CD4-positive, alpha-beta memory T cell (primary cell): ENCODE measurements at regions of chr7 and their contacts with region 1.

Region 1: GRCh38 chr7:1473864-1474512 is 14.7 kb upstream of the MICALL2 start:
- DNase-seq: peak; percentile 85 to 88 (median 87)
- H3K4me3 ChIP-seq: no peak overlapping the region
- H3K4me3 Mint-ChIP-seq: no peak overlapping the region
- H3K27ac ChIP-seq: no peak overlapping the region
- H3K27ac Mint-ChIP-seq: peak overlapping the region in 2 of 7 donors; percentile 4 to 47
- H3K4me1 ChIP-seq: peaks cover 14% of the 10 kb centered on the region
- H3K4me1 Mint-ChIP-seq: peaks cover 3 to 14% (median 10%) of the 10 kb centered on the region in 4 donors
- H3K27me3 ChIP-seq: no peaks in the 10 kb centered on the region
- H3K27me3 Mint-ChIP-seq: no peaks in the 10 kb centered on the region

Region 2: DNA sequence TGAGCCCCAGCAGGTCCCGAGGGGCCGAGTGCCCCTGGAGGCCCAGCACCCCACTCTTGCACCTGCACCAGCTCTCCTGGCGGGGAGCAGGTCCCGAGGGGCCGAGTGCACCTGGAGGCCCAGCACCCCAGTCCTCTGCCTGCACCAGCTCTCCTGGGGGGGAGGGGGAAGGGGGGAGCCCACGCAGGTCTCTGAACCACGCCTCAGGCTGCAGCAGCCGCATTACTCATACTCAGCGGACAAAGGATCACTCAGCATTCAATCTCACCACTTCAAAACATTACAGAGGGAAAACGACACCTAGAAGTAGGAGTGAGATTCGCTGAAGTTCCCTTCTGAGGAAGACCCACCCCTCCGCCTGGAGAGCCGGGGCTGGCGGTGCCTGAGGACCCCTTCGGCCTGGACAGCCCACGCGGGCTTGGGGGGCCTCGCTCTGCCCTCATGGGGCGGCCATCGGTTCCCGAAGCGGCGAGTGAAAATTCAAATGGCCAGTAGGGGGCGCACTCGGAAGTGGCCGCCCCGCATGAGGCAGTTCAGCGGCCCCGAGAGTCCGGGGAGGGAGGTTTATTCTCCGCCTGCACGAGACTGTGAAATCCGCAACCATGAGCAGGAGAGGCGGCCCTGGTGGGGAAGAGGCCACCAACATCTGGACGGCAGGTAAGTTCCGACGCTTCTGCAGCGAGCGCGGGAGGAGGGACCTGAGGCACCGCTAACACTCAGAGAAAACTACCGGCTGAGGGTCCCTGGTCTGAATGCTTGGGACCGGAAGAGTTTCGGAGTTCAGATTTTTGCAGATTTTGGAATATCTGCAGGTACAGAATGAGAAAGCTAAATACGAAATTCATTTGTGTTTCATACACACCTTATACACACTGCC is 387.2 kb before region 1 on chr7:
- CTCF ChIA-PET with region 1: no interaction called
- POLR2A ChIA-PET with region 1: no interaction called
- intact Hi-C with region 1: loop called (anchors 2 kb)
- DNase-seq: peak; percentile 56 to 67 (median 59)
- H3K4me3 ChIP-seq: peak overlapping the region in 1 of 2 donors; percentile 21
- H3K4me3 Mint-ChIP-seq: peak overlapping the region; percentile 65 to 79 (median 70)
- H3K27ac ChIP-seq: no peak overlapping the region
- H3K27ac Mint-ChIP-seq: peak overlapping the region in 2 of 7 donors; percentile 36 to 47
- H3K4me1 ChIP-seq: peaks cover 10% of the 10 kb centered on the region
- H3K4me1 Mint-ChIP-seq: peaks cover 8 to 14% (median 9%) of the 10 kb centered on the region in 4 donors
- H3K27me3 ChIP-seq: no peaks in the 10 kb centered on the region
- H3K27me3 Mint-ChIP-seq: no peaks in the 10 kb centered on the region

Region 3: GRCh38 chr7:1156782-1157535 is 317.0 kb before region 1 on chr7:
- CTCF ChIA-PET with region 1: no interaction called
- POLR2A ChIA-PET with region 1: no interaction called
- intact Hi-C with region 1: no loop called
- DNase-seq: no peak
- H3K4me3 ChIP-seq: no peak overlapping the region
- H3K4me3 Mint-ChIP-seq: peak overlapping the region in 5 of 8 donors; percentile 15 to 88 (median 35)
- H3K27ac ChIP-seq: no peak overlapping the region
- H3K27ac Mint-ChIP-seq: peak overlapping the region in 1 of 7 donors; percentile 79
- H3K4me1 ChIP-seq: peaks cover 29% of the 10 kb centered on the region
- H3K4me1 Mint-ChIP-seq: peaks cover 15 to 30% (median 23%) of the 10 kb centered on the region in 4 donors
- H3K27me3 ChIP-seq: no peaks in the 10 kb centered on the region
- H3K27me3 Mint-ChIP-seq: no peaks in the 10 kb centered on the region

Region 4: GRCh38 chr7:1412322-1413261 is 61.4 kb before region 1 on chr7:
- CTCF ChIA-PET with region 1: interaction called, 4 read pairs
- POLR2A ChIA-PET with region 1: no interaction called
- intact Hi-C with region 1: loop called (anchors 2 kb)
- DNase-seq: peak; percentile 86 to 89 (median 87)
- H3K4me3 ChIP-seq: peak overlapping the region in 1 of 2 donors; percentile 38
- H3K4me3 Mint-ChIP-seq: peak overlapping the region; percentile 49 to 80 (median 68)
- H3K27ac ChIP-seq: no peak overlapping the region
- H3K27ac Mint-ChIP-seq: peak overlapping the region in 5 of 7 donors; percentile 15 to 89 (median 42)
- H3K4me1 ChIP-seq: peaks cover 20% of the 10 kb centered on the region
- H3K4me1 Mint-ChIP-seq: peaks cover 10 to 15% (median 14%) of the 10 kb centered on the region in 4 donors
- H3K27me3 ChIP-seq: no peaks in the 10 kb centered on the region
- H3K27me3 Mint-ChIP-seq: peaks cover 5 to 6% of the 10 kb centered on the region in 2 donors

Region 5: DNA sequence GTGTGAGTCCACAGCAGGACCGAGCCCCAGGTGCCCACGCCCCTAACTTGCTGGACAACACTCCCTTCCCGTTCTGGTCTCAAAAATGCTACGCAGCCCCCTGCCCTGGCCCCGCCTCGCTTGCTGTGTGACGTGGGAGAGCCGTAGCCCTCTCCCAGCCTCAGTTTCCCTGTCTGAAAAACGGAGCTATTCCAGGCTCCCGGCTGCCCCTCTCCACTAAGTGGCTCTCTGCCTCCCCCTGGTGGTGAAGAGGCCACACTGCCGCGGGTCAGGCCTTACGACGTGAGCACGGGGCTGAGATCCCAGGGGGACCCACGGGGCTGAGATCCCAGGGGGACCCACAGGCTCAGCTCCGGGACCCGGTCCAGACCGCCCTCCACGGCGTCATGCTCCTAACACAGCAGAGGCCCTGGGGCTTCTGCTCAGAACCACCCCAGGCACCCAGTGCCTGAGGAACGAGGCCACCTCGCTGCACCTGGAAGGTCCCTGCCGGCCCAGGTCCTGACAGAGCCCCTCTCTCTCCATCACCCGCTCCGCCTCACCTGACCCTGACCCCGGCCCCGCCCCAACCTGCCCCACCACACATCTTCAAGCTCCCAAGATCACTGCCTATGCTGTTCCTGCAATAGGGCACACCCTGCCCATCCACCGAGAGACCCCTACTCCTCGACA is 41.4 kb before region 1 on chr7:
- CTCF ChIA-PET with region 1: interaction called, 17 read pairs
- POLR2A ChIA-PET with region 1: interaction called, 3 read pairs
- intact Hi-C with region 1: loop called (anchors 1 kb)
- DNase-seq: peak; percentile 61 to 75 (median 69)
- H3K4me3 ChIP-seq: no peak overlapping the region
- H3K4me3 Mint-ChIP-seq: peak overlapping the region in 1 of 8 donors; percentile 36
- H3K27ac ChIP-seq: no peak overlapping the region
- H3K27ac Mint-ChIP-seq: no peak overlapping the region
- H3K4me1 ChIP-seq: peaks cover 4% of the 10 kb centered on the region
- H3K4me1 Mint-ChIP-seq: peaks cover 2 to 6% (median 4%) of the 10 kb centered on the region in 4 donors
- H3K27me3 ChIP-seq: no peaks in the 10 kb centered on the region
- H3K27me3 Mint-ChIP-seq: peaks cover 0 to 3% of the 10 kb centered on the region in 2 donors

Region 6: GRCh38 chr7:1459522-1459892 is 14.5 kb before region 1 on chr7:
- CTCF ChIA-PET with region 1: interaction called, 15 read pairs
- POLR2A ChIA-PET with region 1: interaction called, 6 read pairs
- intact Hi-C with region 1: loop called (anchors 1 kb)
- DNase-seq: peak; percentile 98 to 99 (median 98)
- H3K4me3 ChIP-seq: peak overlapping the region in 1 of 2 donors; percentile 75
- H3K4me3 Mint-ChIP-seq: peak overlapping the region in 7 of 8 donors; percentile 62 to 81 (median 76)
- H3K27ac ChIP-seq: peak overlapping the region; percentile 34
- H3K27ac Mint-ChIP-seq: peak overlapping the region in 2 of 7 donors; percentile 35 to 63
- H3K4me1 ChIP-seq: peaks cover 28% of the 10 kb centered on the region
- H3K4me1 Mint-ChIP-seq: peaks cover 9 to 38% (median 16%) of the 10 kb centered on the region in 4 donors
- H3K27me3 ChIP-seq: no peaks in the 10 kb centered on the region
- H3K27me3 Mint-ChIP-seq: no peaks in the 10 kb centered on the region

Region 7: GRCh38 chr7:1494447-1494846 is 20.5 kb after region 1 on chr7:
- CTCF ChIA-PET with region 1: interaction called, 10 read pairs
- POLR2A ChIA-PET with region 1: interaction called, 3 read pairs
- intact Hi-C with region 1: no loop called
- DNase-seq: peak in 1 of 5 donors; percentile 31
- H3K4me3 ChIP-seq: no peak overlapping the region
- H3K4me3 Mint-ChIP-seq: no peak overlapping the region
- H3K27ac ChIP-seq: no peak overlapping the region
- H3K27ac Mint-ChIP-seq: no peak overlapping the region
- H3K4me1 ChIP-seq: no peaks in the 10 kb centered on the region
- H3K4me1 Mint-ChIP-seq: peaks cover 0 to 4% (median 2%) of the 10 kb centered on the region in 4 donors
- H3K27me3 ChIP-seq: no peaks in the 10 kb centered on the region
- H3K27me3 Mint-ChIP-seq: no peaks in the 10 kb centered on the region

Region 8: GRCh38 chr7:1522921-1523607 is 49.1 kb after region 1 on chr7:
- CTCF ChIA-PET with region 1: no interaction called
- POLR2A ChIA-PET with region 1: no interaction called
- intact Hi-C with region 1: no loop called
- DNase-seq: peak in 1 of 5 donors; percentile 6
- H3K4me3 ChIP-seq: no peak overlapping the region
- H3K4me3 Mint-ChIP-seq: no peak overlapping the region
- H3K27ac ChIP-seq: no peak overlapping the region
- H3K27ac Mint-ChIP-seq: no peak overlapping the region
- H3K4me1 ChIP-seq: no peaks in the 10 kb centered on the region
- H3K4me1 Mint-ChIP-seq: no peaks in the 10 kb centered on the region
- H3K27me3 ChIP-seq: peaks cover 4% of the 10 kb centered on the region
- H3K27me3 Mint-ChIP-seq: peaks cover 2 to 5% of the 10 kb centered on the region in 2 donors

Region 9: GRCh38 chr7:1693991-1694524 is 220.1 kb after region 1 on chr7:
- CTCF ChIA-PET with region 1: no interaction called
- POLR2A ChIA-PET with region 1: no interaction called
- intact Hi-C with region 1: no loop called
- DNase-seq: no peak
- H3K4me3 ChIP-seq: no peak overlapping the region
- H3K4me3 Mint-ChIP-seq: no peak overlapping the region
- H3K27ac ChIP-seq: no peak overlapping the region
- H3K27ac Mint-ChIP-seq: no peak overlapping the region
- H3K4me1 ChIP-seq: no peaks in the 10 kb centered on the region
- H3K4me1 Mint-ChIP-seq: peaks cover 0 to 3% (median 0%) of the 10 kb centered on the region in 4 donors
- H3K27me3 ChIP-seq: no peaks in the 10 kb centered on the region
- H3K27me3 Mint-ChIP-seq: peaks cover 8 to 11% of the 10 kb centered on the region in 2 donors